CD4-positive, alpha-beta T cell (primary cell): ENCODE measurements at regions of chr3 and their contacts with region 1.

Region 1: GRCh38 chr3:187738331-187739093 is 6.8 kb downstream of the BCL6 start:
- DNase-seq: peak; percentile 48 to 85 (median 57)
- ATAC-seq: peak; percentile 48
- H3K4me3 ChIP-seq: peak overlapping the region; percentile 96
- H3K4me3 Mint-ChIP-seq: peak overlapping the region; percentile 100
- H3K27ac ChIP-seq: peak overlapping the region in 1 of 2 donors; percentile 56
- H3K27ac Mint-ChIP-seq: peak overlapping the region; percentile 99
- H3K4me1 ChIP-seq: peaks cover 65% of the 10 kb centered on the region
- H3K4me1 Mint-ChIP-seq: peaks cover 51% of the 10 kb centered on the region
- H3K27me3 ChIP-seq: no peaks in the 10 kb centered on the region
- H3K27me3 Mint-ChIP-seq: no peaks in the 10 kb centered on the region
- CTCF ChIP-seq: peak; percentile 91

Region 2: GRCh38 chr3:186669378-186670084 is 1069.0 kb before region 1 on chr3:
- CTCF ChIA-PET with region 1: no interaction called
- POLR2A ChIA-PET with region 1: no interaction called
- intact Hi-C with region 1: no loop called
- DNase-seq: no peak
- ATAC-seq: no peak
- H3K4me3 ChIP-seq: no peak overlapping the region
- H3K4me3 Mint-ChIP-seq: no peak overlapping the region
- H3K27ac ChIP-seq: no peak overlapping the region
- H3K27ac Mint-ChIP-seq: no peak overlapping the region
- H3K4me1 ChIP-seq: no peaks in the 10 kb centered on the region
- H3K4me1 Mint-ChIP-seq: no peaks in the 10 kb centered on the region
- H3K27me3 ChIP-seq: no peaks in the 10 kb centered on the region
- H3K27me3 Mint-ChIP-seq: peaks cover 33% of the 10 kb centered on the region
- CTCF ChIP-seq: no peak

Region 3: GRCh38 chr3:186783073-186783730 is 955.3 kb before region 1 on chr3 and contains the start of gene EIF4A2:
- CTCF ChIA-PET with region 1: no interaction called
- POLR2A ChIA-PET with region 1: interaction called, 11 read pairs
- intact Hi-C with region 1: no loop called
- DNase-seq: peak; percentile 84 to 96 (median 89)
- ATAC-seq: peak; percentile 68
- H3K4me3 ChIP-seq: peak within 1 kb of the TSS; percentile 92
- H3K4me3 Mint-ChIP-seq: peak within 1 kb of the TSS; percentile 95
- H3K27ac ChIP-seq: peak within 1 kb of the TSS; percentile 96 to 99
- H3K27ac Mint-ChIP-seq: peak within 1 kb of the TSS; percentile 96
- H3K4me1 ChIP-seq: peaks cover 32% of the 10 kb centered on the region
- H3K4me1 Mint-ChIP-seq: peaks cover 59% of the 10 kb centered on the region
- H3K27me3 ChIP-seq: no peaks in the 10 kb centered on the region
- H3K27me3 Mint-ChIP-seq: peaks cover 5% of the 10 kb centered on the region
- CTCF ChIP-seq: no peak
- total RNA-seq, gene EIF4A2: 1,039 to 1,046 TPM

Region 4: DNA sequence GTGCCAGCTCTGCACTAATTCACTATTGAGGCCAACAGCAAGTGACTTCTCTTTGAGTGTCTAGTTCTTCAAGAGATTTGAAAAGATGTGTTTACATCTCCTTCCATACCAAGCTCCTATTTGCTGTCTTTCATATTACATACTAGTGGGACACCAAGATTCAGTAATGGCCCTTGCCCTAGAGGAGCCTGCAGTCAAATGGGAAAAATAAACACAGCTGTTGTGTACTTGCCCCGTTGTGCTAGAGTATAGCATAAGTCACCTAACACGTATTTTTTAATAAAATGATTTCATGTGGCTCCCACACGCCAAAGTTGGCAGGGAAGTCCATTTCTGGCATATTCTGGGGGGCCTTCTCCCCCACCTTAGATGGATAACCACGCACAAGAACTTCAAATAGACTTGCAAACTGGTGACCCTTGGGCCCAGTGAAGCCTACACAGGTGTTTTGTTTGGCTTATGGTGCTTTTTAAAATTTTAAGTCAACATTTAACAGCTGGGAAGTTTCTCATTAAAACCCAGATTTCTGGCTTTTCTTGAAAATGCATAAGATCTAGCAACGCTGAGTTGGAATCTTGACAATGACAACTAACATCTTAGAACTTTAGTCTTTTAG is 320.2 kb after region 1 on chr3:
- CTCF ChIA-PET with region 1: no interaction called
- POLR2A ChIA-PET with region 1: no interaction called
- intact Hi-C with region 1: loop called in 1 of 2 experiments (anchors 2 kb)
- DNase-seq: no peak
- ATAC-seq: no peak
- H3K4me3 ChIP-seq: no peak overlapping the region
- H3K4me3 Mint-ChIP-seq: no peak overlapping the region
- H3K27ac ChIP-seq: no peak overlapping the region
- H3K27ac Mint-ChIP-seq: no peak overlapping the region
- H3K4me1 ChIP-seq: peaks cover 6% of the 10 kb centered on the region
- H3K4me1 Mint-ChIP-seq: peaks cover 9% of the 10 kb centered on the region
- H3K27me3 ChIP-seq: no peaks in the 10 kb centered on the region
- H3K27me3 Mint-ChIP-seq: no peaks in the 10 kb centered on the region
- CTCF ChIP-seq: no peak

Region 5: GRCh38 chr3:188320757-188321156 is 582.2 kb after region 1 on chr3:
- CTCF ChIA-PET with region 1: interaction called, 8 read pairs
- POLR2A ChIA-PET with region 1: no interaction called
- intact Hi-C with region 1: loop called in 1 of 2 experiments (anchors 5 kb)
- DNase-seq: no peak
- ATAC-seq: no peak
- H3K4me3 ChIP-seq: no peak overlapping the region
- H3K4me3 Mint-ChIP-seq: no peak overlapping the region
- H3K27ac ChIP-seq: no peak overlapping the region
- H3K27ac Mint-ChIP-seq: no peak overlapping the region
- H3K4me1 ChIP-seq: peaks cover 21% of the 10 kb centered on the region
- H3K4me1 Mint-ChIP-seq: peaks cover 56% of the 10 kb centered on the region
- H3K27me3 ChIP-seq: no peaks in the 10 kb centered on the region
- H3K27me3 Mint-ChIP-seq: no peaks in the 10 kb centered on the region
- CTCF ChIP-seq: no peak

Region 6: DNA sequence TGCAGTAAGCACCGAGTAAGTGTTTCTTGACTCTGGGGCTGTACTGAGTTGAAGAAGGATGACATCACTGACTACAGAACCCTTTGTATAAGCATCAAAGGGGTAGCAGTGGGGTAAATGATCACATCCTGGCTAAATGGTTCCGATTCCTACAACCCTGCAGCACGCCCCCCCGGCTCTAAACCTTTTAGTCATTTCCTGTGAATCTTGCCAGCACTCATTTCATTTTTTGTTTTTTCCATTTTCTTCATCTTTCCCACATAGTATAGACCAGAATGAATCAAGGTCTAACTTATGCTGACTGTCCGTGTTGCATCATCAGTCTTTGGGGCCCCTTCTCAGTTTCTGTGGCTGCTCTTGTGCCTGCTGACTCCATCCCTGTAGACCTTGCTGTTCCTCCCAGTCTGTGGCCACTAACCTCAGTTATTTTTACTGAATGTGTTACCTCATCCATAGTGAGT is 1050.1 kb after region 1 on chr3:
- CTCF ChIA-PET with region 1: interaction called, 3 read pairs
- POLR2A ChIA-PET with region 1: interaction called, 4 read pairs
- intact Hi-C with region 1: loop called in 1 of 2 experiments (anchors 5 kb)
- DNase-seq: peak in 13 of 14 experiments; percentile 2 to 65 (median 38)
- ATAC-seq: peak; percentile 97
- H3K4me3 ChIP-seq: no peak overlapping the region
- H3K4me3 Mint-ChIP-seq: no peak overlapping the region
- H3K27ac ChIP-seq: no peak overlapping the region
- H3K27ac Mint-ChIP-seq: no peak overlapping the region
- H3K4me1 ChIP-seq: peaks cover 12% of the 10 kb centered on the region
- H3K4me1 Mint-ChIP-seq: no peaks in the 10 kb centered on the region
- H3K27me3 ChIP-seq: no peaks in the 10 kb centered on the region
- H3K27me3 Mint-ChIP-seq: no peaks in the 10 kb centered on the region
- CTCF ChIP-seq: no peak

Region 7: DNA sequence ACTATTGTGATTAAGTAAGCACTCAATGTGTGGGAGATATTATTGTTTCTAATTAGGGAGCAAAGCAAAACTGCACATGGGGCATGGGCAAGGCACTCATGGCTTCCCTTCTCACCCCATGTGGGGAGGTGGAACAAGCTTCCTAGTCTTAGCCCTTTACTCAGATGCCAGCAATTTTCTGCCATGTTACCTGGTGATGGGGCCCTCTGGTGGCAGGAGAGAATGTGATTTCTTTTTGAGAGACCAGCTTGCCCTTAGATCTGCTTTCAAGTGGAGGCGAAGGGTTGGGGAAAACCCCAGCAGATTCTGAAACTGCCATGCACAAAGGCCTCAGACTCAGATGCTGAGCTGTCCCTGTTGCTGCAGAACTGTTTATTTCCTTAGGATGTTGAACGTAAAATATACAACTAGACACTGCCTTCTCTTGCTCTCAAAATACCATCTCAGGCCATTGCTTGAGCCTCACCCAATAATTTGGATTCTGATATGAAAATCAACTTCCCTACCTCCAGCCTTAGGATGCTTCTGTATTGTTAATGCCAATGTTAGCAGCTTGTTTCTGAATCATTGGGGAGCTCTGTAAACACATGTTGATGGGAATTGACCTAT is 1303.1 kb after region 1 on chr3:
- CTCF ChIA-PET with region 1: interaction called, 38 read pairs
- POLR2A ChIA-PET with region 1: interaction called, 14 read pairs
- intact Hi-C with region 1: loop called (anchors 1 to 2 kb)
- DNase-seq: peak; percentile 51 to 89 (median 63)
- ATAC-seq: peak; percentile 98
- H3K4me3 ChIP-seq: no peak overlapping the region
- H3K4me3 Mint-ChIP-seq: no peak overlapping the region
- H3K27ac ChIP-seq: peak overlapping the region in 1 of 2 donors; percentile 6
- H3K27ac Mint-ChIP-seq: peak overlapping the region; percentile 5
- H3K4me1 ChIP-seq: peaks cover 6% of the 10 kb centered on the region
- H3K4me1 Mint-ChIP-seq: peaks cover 8% of the 10 kb centered on the region
- H3K27me3 ChIP-seq: no peaks in the 10 kb centered on the region
- H3K27me3 Mint-ChIP-seq: no peaks in the 10 kb centered on the region
- CTCF ChIP-seq: peak; percentile 54

Region 8: GRCh38 chr3:189324538-189325138 is 1586.1 kb after region 1 on chr3:
- CTCF ChIA-PET with region 1: no interaction called
- POLR2A ChIA-PET with region 1: interaction called, 5 read pairs
- intact Hi-C with region 1: loop called in 1 of 2 experiments (anchors 5 kb)
- DNase-seq: peak; percentile 48 to 97 (median 71)
- ATAC-seq: peak; percentile 96
- H3K4me3 ChIP-seq: no peak overlapping the region
- H3K4me3 Mint-ChIP-seq: peak overlapping the region; percentile 86
- H3K27ac ChIP-seq: peak overlapping the region; percentile 26 to 33
- H3K27ac Mint-ChIP-seq: peak overlapping the region; percentile 92
- H3K4me1 ChIP-seq: peaks cover 34% of the 10 kb centered on the region
- H3K4me1 Mint-ChIP-seq: peaks cover 75% of the 10 kb centered on the region
- H3K27me3 ChIP-seq: no peaks in the 10 kb centered on the region
- H3K27me3 Mint-ChIP-seq: no peaks in the 10 kb centered on the region
- CTCF ChIP-seq: no peak